RWPE1 (cell line): ENCODE measurements at regions of chr3 and their contacts with region 1.

Region 1: GRCh38 chr3:47781685-47782445 is at the start of gene SMARCC1:
- DNase-seq: peak; percentile 91
- H3K27ac ChIP-seq: peak within 1 kb of the TSS; percentile 95
- CTCF ChIP-seq: no peak

Region 2: DNA sequence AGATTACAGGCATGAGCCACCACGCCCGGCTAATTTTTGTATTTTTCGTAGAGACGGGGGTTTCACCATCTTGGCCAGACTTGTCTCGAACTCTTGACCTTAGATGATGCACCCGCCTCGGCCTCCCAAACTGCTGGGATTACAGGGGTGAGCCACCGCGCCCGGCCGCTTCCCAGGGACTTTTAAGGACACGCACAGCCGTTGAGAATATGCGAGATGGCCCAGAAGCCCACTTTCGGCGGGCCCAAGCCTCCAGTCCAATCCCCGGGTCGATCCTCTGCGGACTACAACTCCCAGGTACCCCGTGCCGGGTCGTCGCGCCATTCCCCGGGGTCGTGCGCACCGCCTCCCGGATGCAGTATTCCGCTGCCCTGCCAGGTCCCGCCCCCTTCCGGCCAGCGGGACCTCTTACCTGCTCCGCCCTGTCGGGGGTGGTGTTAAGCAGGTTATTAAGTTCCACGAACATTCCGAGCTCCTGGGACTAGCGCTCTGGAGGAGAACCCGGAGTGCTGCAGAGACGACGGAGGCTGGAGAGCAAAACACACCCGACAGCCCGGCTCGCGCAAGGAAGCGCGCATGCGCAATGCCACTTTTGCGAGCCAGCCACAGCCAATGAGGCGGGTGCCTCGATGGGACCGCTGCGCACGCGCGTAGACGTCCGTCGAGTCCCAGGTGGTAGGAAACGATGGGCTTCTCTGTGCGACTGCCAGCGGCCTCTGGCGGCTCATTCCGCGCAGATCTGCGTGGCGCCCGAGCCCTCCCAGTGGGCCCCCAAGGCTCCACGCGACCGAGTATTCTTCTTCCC is 268.5 kb before region 1 on chr3 and contains the start of gene ELP6:
- CTCF ChIA-PET with region 1: interaction called, 4 read pairs
- POLR2A ChIA-PET with region 1: interaction called, 13 read pairs
- DNase-seq: peak; percentile 91
- H3K27ac ChIP-seq: peak within 1 kb of the TSS; percentile 100
- CTCF ChIP-seq: peak; percentile 58